Activated T-helper 1 cell treated with anti-CD3 and anti-CD28 coated beads, Interleukin-12 subunit alpha, Interleukin-12 subunit beta, Interleukin-2, Interleukin-4 antibody, amounts not matched to agents 30 ng/mL and 10 ng/mL and 1 ng/mL, durations not matched to agents 14 hours and 24 hours and 36 hours (primary cell): ENCODE measurements at regions of chr11 and their contacts with region 1.

Region 1: DNA sequence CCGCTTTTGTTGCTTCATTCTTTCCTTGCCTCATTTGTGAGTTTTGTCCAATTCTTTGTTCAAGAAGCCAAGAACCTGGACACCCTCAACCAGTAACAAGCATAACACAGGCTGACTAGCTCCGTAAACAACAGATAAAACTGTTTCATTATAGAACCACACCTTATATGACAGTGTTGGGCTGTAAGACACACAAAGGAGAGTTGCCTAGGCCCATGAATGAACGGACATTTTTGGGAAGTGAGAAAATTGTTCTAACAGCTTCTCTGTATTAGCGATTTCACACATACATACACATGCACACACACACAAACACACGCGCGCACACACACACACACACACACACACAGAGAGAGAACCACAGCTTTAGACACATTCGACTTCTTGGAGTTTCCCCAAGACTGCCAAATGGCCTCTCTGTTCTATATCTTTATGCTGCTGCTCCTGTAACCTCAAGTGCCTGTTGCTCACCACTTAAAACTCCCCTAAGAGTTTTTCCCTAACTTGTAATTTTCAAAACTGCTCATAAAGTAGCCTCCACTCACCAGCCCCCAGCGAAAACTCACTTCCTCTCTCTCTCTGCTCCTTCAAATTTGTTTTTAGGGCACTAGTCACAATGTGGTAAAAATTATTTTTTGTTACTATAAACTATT is 35.9 kb downstream of the CTSC start:
- DNase-seq: no peak
- H3K4me3 Mint-ChIP-seq: peak overlapping the region; percentile 1
- H3K27ac Mint-ChIP-seq: peak overlapping the region; percentile 95
- H3K4me1 Mint-ChIP-seq: peaks cover 50% of the 10 kb centered on the region
- H3K27me3 Mint-ChIP-seq: no peaks in the 10 kb centered on the region

Region 2: DNA sequence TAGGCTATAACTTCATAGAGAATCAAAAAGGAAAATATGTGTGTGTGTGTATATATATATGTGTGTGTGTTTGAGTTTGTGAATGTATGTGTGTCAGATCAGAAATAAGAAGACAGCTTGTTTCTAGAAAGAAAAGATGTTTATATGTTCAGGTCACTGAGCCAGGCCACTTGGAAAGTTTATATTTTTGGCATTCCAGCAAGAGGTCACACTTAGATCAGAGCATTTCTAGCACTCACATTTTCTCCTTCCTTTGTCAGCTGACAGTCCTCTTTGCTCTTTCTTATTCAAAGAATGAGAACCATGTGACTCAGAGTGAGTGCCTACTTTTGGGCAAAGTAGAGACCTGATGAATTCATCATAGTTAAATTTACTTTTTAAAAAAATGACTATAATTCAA is 149.2 kb before region 1 on chr11:
- intact Hi-C with region 1: no loop called
- DNase-seq: no peak
- H3K4me3 Mint-ChIP-seq: no peak overlapping the region
- H3K27ac Mint-ChIP-seq: no peak overlapping the region
- H3K4me1 Mint-ChIP-seq: no peaks in the 10 kb centered on the region
- H3K27me3 Mint-ChIP-seq: peaks cover 5% of the 10 kb centered on the region

Region 3: DNA sequence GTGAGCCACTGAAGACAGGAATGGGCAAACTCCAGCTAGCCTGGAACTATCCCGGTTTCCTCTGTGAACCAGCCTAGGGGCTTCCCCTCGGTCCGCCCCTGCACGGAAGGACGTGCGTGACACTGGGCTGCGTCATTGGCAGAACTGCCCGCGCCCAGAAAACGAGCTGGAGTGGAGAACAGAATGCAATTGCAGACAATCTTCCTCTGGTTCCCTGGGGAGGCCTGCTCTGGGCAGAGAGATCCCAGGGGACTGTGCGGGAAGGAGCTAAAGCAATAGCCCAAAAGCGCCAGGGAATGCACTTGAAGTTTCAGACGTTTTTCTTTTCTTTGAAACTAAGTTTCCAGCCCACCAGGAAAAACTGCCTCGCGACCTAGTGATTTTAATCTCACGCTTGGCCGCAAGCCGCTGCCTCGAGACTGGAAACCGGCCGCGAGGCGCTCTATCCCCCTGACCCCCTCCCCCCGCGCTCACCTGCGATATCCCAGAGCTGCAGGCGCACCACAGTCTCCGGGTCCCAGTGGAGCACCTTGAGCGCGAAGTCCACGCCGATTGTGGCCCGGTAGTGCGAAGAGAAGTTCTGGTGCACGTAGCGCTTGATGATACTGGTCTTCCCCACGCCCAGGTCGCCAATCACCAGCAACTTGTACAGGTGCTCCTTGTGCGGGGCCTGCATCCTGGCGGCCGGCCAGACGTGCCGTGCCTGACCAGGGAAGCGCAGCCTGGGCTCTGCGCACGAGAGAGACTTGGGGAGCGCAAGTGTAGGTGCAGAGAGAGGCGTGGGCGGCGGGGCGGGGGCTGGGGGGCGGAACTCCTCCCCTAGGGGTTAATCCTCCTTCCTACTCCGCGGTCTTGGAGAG is 126.7 kb before region 1 on chr11 and contains the start of gene RAB38:
- intact Hi-C with region 1: loop called (anchors 1 kb)
- DNase-seq: peak; percentile 32
- H3K4me3 Mint-ChIP-seq: peak within 1 kb of the TSS; percentile 83
- H3K27ac Mint-ChIP-seq: peak within 1 kb of the TSS; percentile 73
- H3K4me1 Mint-ChIP-seq: peaks cover 52% of the 10 kb centered on the region
- H3K27me3 Mint-ChIP-seq: no peaks in the 10 kb centered on the region
- total RNA-seq, gene RAB38: 2.0 and 2.8 TPM in 2 replicates

Region 4: GRCh38 chr11:88421530-88421929 is 119.9 kb after region 1 on chr11:
- intact Hi-C with region 1: loop called (anchors 2 kb)
- DNase-seq: peak; percentile 43
- H3K4me3 Mint-ChIP-seq: peak overlapping the region; percentile 67
- H3K27ac Mint-ChIP-seq: peak overlapping the region; percentile 90
- H3K4me1 Mint-ChIP-seq: peaks cover 69% of the 10 kb centered on the region
- H3K27me3 Mint-ChIP-seq: no peaks in the 10 kb centered on the region